Posterior cingulate gyrus (tissue), 11 donors: ENCODE measurements at regions of chr11 and their contacts with region 1.

Region 1: DNA sequence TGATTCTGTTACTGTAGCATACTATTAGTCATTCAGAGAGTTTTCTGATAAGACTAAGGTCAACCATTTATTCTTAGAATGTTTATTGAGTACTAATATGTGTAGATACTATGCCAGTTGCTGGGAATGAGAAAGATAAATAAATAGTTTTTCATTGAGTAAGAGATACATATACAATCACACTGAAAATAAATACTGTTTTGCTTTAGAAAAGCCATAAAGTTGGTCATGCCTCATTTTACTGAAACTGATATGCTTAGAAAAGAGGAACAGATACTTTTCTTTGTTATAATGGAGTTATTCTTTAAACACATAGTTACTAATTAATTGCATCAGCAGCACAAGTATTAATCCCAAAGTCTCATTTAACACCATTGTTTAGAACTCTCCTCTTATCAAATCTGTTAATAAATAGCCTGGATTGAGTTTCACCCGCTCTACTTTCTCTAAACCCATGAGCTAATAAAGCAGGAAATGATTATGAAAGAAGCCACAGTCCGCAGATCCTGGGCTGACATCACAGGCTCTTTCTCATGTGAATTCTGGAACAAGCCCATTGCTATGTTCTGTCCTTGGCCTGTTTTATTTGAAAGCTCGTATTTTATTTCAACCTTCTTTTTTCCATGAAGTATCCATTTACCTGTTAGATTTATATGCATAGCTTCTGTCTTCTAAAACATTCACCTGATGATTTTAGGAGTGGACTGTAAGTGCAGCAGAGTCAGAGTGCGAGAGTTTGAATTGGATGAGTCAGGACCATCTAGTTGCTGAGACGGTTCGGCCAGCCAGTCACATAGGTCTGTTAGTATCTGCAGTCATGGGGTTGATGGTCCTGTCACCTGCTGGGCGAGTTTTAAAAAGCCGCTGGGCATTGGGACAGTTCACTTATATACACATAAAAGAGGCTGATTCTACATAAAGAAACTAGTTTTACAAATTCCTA is 35.5 kb downstream of the PIWIL4 start:
- DNase-seq: peak in 6 of 10 donors; percentile 49 to 94 (median 64)

Region 2: GRCh38 chr11:94519478-94520084 is 83.1 kb before region 1 on chr11:
- intact Hi-C with region 1: loop called (anchors 1 kb)
- DNase-seq: no peak

Region 3: GRCh38 chr11:94563176-94563847 is 39.4 kb before region 1 on chr11:
- intact Hi-C with region 1: no loop called
- DNase-seq: no peak

Region 4: DNA sequence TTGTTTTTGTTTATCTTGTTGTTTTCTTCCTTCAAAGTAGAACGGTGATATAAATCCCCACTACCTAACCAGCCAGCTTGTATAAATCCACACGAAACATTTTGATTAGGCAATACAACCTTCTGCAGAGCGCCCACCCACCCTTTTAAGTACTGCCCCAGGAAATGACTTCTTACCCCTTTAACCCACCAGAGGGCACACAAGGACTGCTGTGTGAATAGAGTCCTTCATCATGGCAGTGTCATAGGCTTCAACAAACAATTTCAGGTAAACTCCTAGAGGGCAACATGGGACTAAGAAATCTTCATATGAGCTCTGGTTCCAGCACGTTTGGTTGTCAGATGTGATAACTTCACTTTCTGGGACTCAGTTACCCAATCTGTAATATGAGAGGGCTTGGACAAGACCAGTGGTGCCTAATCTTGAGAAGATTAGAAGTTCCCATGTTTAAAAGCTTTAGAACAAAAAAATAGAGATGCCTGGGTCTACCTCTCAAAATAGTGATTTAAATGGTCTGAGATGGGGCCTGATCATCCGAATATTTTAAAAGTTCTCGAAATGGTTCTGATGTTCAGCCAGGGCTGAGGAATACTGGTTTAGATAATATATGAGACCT is 20.5 kb after region 1 on chr11:
- intact Hi-C with region 1: no loop called
- DNase-seq: peak in 3 of 10 donors; percentile 17 to 36 (median 20)

Region 5: GRCh38 chr11:94731880-94732601 is 129.3 kb after region 1 on chr11:
- intact Hi-C with region 1: no loop called
- DNase-seq: peak in 3 of 10 donors; percentile 13 to 77 (median 16)